H1 (cell line): ENCODE measurements at regions of chr16 and their contacts with region 1.

Region 1: DNA sequence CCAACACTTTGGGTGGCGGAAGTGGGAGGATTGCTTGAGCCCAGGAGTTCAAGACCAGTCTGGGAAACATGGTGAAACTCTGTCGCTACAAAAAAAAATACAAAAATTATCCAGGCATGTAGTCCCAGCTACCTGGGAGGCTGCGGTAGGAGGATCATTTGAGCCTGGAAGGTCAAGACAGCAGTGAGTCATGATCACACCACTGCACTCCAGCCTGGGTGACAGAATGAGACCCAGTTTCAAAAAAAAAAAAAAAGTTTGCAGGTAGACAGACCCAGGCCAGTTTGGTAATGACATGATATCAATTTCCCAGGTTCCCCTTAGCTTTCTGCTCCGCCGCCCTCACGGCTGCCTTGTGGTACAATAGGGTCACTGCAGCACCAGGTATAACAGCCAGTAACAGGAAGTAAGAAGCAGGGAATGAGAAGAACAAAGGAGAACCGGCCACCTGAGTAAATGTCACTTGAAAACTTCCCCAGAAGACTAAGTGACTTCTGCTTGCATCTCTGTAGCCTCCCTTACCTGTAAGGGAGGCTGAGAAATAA is 201.2 kb upstream of the HSBP1 start:
- DNase-seq: peak in 1 of 2 experiments; percentile 46
- H3K4me3 ChIP-seq: no peak overlapping the region
- H3K27ac ChIP-seq: no peak overlapping the region
- H3K4me1 ChIP-seq: peaks cover 6 to 14% (median 10%) of the 10 kb centered on the region in 4 experiments
- H3K27me3 ChIP-seq: no peaks in the 10 kb centered on the region; a peak in 1 of 7 replicates
- CTCF ChIP-seq: peak in 2 of 3 experiments; percentile 24 to 54; a peak in 3 of 4 replicates
- EP300 ChIP-seq: no peak
- POLR2A ChIP-seq: no peak
- RAD21 ChIP-seq: peak in 1 of 2 experiments; percentile 32; a peak in 1 of 4 replicates

Region 2: DNA sequence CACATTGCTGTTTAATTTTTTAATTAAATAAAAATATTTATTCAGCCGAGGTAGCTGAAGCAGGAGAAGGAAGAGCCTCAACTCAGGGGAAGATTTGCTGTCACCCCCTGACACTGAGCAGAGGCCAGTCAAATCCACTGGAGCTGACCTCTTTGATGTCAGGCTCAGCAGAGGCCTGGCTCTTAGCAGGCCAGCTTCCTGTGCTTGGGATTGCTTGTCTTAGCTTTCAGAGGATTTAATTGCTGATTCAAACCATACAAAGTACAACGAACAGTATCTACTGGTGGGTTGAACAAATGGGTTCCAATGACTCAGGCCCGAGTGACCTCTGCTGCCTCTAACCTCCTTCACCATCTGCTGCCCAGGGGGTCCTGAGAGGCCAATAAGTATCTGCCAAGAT is 215.8 kb before region 1 on chr16:
- CTCF ChIA-PET with region 1: no interaction called
- POLR2A ChIA-PET with region 1: no interaction called
- DNase-seq: no peak
- H3K4me3 ChIP-seq: no peak overlapping the region
- H3K27ac ChIP-seq: no peak overlapping the region
- H3K4me1 ChIP-seq: no peaks in the 10 kb centered on the region
- H3K27me3 ChIP-seq: no peaks in the 10 kb centered on the region
- CTCF ChIP-seq: no peak
- EP300 ChIP-seq: no peak
- POLR2A ChIP-seq: no peak
- RAD21 ChIP-seq: no peak

Region 3: DNA sequence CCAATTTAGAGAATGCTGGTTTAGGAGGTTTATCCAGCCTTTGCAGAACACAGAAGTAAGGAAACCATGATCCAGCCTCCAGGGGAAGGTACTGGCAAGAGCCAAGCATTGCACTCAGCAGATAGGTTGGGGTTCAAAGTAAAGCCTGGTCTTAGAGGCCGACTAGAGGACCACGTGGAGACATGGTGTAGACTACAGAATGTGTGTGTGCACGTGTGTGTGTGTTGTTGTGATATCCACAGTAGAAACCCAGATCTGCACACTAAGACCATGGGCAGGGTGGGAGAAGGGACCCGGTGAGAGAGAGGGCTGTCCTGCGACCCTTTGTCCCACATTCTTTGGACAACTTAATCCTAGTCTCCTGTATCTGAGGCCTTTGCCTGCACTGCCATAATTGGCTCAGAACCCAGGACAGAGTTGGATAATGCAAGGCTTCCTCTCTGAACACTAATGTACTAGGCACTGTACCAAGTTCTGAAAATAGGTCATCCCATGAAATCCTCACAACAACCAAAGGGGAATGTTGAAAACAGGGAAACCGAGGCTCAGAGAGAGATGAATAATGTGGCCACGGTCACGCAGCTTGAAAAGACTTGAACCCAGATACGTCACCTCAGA is 123.9 kb before region 1 on chr16:
- CTCF ChIA-PET with region 1: no interaction called
- POLR2A ChIA-PET with region 1: no interaction called
- DNase-seq: no peak
- H3K4me3 ChIP-seq: no peak overlapping the region
- H3K27ac ChIP-seq: no peak overlapping the region
- H3K4me1 ChIP-seq: no peaks in the 10 kb centered on the region
- H3K27me3 ChIP-seq: no peaks in the 10 kb centered on the region; a peak in 1 of 7 replicates
- CTCF ChIP-seq: no peak
- EP300 ChIP-seq: no peak
- POLR2A ChIP-seq: no peak
- RAD21 ChIP-seq: no peak

Region 4: GRCh38 chr16:83501481-83501880 is 105.1 kb before region 1 on chr16:
- CTCF ChIA-PET with region 1: no interaction called
- POLR2A ChIA-PET with region 1: no interaction called
- DNase-seq: no peak
- H3K4me3 ChIP-seq: no peak overlapping the region
- H3K27ac ChIP-seq: no peak overlapping the region
- H3K4me1 ChIP-seq: no peaks in the 10 kb centered on the region
- H3K27me3 ChIP-seq: no peaks in the 10 kb centered on the region
- CTCF ChIP-seq: no peak
- EP300 ChIP-seq: no peak
- POLR2A ChIP-seq: no peak
- RAD21 ChIP-seq: no peak

Region 5: GRCh38 chr16:83592778-83593177 is 13.8 kb before region 1 on chr16:
- CTCF ChIA-PET with region 1: interaction called, 15 read pairs
- POLR2A ChIA-PET with region 1: no interaction called
- DNase-seq: no peak
- H3K4me3 ChIP-seq: no peak overlapping the region
- H3K27ac ChIP-seq: no peak overlapping the region
- H3K4me1 ChIP-seq: no peaks in the 10 kb centered on the region
- H3K27me3 ChIP-seq: no peaks in the 10 kb centered on the region
- CTCF ChIP-seq: no peak
- EP300 ChIP-seq: no peak
- POLR2A ChIP-seq: no peak
- RAD21 ChIP-seq: no peak

Region 6: DNA sequence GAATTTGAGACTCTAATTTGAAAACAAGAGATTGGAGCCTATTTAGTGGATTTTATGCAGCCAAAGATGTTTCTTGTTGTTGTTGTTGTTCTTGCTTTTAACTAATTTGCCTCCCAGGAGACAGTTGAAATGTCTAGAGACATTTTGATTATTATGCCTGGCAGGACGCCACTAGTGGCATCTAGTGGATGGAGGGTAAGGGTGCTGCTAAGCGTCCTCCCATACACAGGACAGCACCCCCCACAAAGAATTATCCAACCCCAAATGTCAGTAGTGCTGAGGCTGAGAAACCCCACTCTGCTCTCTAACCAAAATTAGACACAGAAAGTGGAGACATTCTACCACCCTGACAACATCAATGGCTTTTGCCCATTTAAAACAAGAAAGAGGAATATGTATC is 185.8 kb after region 1 on chr16:
- CTCF ChIA-PET with region 1: no interaction called
- POLR2A ChIA-PET with region 1: no interaction called
- DNase-seq: no peak
- H3K4me3 ChIP-seq: no peak overlapping the region
- H3K27ac ChIP-seq: no peak overlapping the region
- H3K4me1 ChIP-seq: no peaks in the 10 kb centered on the region
- H3K27me3 ChIP-seq: no peaks in the 10 kb centered on the region
- CTCF ChIP-seq: peak; percentile 7 to 18 (median 11); a peak in 2 of 4 replicates
- EP300 ChIP-seq: no peak
- POLR2A ChIP-seq: no peak
- RAD21 ChIP-seq: peak; percentile 25 to 38; a peak in 3 of 4 replicates